ENCODE measurements at regions of chr5 and their contacts with region 1.

Region 1: GRCh38 chr5:83401122-83401731 is 70.3 kb upstream of the VCAN start:
- DNase-seq: no peak
- ATAC-seq: no peak

Region 2: GRCh38 chr5:82526540-82526939 is 874.7 kb before region 1 on chr5:
- intact Hi-C with region 1: no loop called
- DNase-seq: no peak
- ATAC-seq: no peak

Region 3: DNA sequence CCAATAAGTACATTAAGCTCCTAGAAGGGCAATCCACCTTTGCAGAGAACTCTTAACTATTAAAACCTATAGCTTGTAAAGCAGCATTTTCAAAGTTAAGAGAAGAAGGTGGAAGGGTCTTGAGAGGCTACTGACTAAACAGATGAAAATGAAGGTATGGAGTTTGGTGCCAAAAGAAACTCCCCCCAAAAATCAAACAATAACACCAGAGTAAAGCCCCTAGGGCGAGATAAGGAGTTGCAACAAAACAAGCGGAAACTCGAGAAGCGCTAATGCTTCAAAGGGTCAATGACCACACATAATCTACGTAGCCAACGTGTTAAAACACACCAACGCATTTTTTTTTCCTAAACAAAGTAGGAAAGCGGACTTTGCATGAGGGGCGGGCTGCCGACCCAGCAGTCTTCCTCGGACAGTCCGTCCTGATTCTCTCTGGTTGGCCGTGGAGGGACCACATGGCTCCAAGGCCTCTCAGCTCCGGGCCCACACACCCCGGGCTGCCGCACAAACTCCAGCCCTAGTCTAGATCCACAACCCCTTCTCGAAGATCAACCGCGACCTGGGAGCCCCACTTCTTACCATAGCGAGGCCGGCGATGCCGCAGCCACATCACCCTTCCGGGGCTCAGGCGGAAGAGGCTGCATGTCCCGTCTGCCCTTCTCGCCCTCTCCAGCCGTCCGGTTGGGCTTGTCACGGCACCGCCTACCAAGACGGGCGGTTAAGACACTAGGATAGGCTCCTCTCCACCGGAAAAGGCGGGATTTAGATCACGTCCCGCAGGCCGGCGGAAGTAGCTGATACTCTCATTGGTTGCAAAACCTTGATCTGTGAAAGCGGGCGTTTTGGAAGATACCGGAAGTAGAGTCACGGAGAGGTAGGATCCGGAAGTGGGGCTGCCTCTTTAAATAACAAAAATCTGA is 324.2 kb before region 1 on chr5 and contains the starts of genes TMEM167A and XRCC4:
- intact Hi-C with region 1: loop called (anchors 10 kb)
- DNase-seq: peak; percentile 98
- ATAC-seq: peak; percentile 100
- total RNA-seq, gene TMEM167A: 53.9 TPM
- total RNA-seq, gene XRCC4: 7.9 TPM

Region 4: DNA sequence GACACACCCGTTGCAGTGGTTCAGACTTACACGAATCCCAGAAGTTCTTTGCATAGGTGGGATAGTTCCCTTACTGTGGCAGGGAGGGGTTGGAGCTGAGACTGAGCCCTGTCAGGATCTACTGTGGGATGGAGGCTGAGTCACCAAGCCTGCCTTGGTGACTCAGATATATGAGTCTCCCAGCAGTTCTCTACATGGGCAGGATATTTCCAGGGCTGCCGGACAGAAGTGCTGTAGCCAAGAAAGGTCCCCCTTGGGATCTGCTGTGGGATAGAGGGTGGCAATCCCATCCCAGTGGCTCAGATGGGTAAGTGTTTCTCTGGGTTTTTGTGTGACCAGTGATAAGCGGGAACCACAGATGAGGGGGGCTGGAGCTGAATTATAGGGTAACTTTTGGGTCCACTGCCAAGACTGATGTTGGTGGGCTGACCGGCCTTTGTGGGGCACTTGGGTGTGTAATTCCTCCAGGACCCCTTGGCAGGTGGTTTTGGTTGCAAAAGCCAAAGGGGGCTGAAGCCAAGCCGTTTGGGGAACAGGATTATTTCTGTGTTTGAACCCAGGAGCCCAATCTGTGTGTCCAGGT is 305.2 kb before region 1 on chr5:
- intact Hi-C with region 1: loop called (anchors 5 kb)
- DNase-seq: no peak
- ATAC-seq: no peak

Region 5: GRCh38 chr5:83277953-83278352 is 123.3 kb before region 1 on chr5:
- intact Hi-C with region 1: loop called (anchors 10 kb)
- DNase-seq: no peak
- ATAC-seq: no peak

Measured in Right ventricle myocardium inferior (tissue), 1 donor.